Activated B cell treated with CpG ODN at 0.5 μM for 24 hours (primary cell): ENCODE measurements at regions of chr1 and their contacts with region 1.

Region 1: DNA sequence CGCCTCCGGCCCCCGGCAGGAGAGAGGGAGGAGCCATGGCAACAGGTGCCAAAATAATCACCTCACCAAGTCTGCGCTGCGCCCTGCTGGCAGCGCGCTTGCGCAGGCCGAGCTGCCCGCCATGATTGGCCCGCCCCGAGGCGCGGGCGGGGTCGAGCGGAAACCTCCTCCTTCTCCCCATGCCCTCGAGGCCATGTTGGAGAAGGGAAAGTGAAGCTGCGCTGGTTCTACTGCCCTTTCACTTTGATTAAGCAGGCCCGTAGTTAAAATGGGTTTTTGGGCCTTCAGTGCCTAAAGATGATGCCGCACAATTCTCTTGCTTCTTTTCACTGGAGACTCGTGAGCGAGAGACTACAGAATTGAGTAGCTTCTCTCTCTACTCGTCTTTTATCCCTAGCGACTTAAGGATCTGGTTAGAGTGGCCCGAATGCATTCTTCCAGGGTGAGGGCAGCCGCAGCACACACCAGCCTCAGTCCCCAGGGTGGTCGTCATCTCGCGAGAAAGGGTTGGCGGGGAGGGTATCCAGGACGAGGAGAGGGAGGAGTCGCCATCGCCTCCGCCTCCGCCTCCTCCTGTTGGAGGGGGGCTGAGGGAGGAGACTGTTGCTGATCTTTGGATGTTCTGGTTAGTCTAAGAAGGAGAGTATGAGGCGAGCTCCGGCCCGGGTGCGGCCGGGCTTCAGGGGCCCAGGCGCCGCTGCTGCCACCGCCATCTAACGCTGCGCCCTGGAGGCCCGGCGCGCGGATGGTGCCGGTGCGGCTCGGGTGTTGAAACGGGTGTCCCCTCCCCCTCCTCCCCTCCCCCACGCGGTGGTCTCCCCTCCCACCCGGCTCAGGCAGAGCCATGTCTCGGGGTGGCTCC is at the start of gene DCAF6:
- DNase-seq: peak; percentile 92
- ATAC-seq: peak; percentile 79
- H3K4me3 Mint-ChIP-seq: peak within 1 kb of the TSS; percentile 88
- H3K27ac Mint-ChIP-seq: peak within 1 kb of the TSS; percentile 100
- H3K4me1 Mint-ChIP-seq: peaks cover 35% of the 10 kb centered on the region
- H3K27me3 Mint-ChIP-seq: no peaks in the 10 kb centered on the region
- CTCF ChIP-seq: no peak
- total RNA-seq, gene DCAF6: 23.1 and 32.9 TPM in 2 replicates

Region 2: DNA sequence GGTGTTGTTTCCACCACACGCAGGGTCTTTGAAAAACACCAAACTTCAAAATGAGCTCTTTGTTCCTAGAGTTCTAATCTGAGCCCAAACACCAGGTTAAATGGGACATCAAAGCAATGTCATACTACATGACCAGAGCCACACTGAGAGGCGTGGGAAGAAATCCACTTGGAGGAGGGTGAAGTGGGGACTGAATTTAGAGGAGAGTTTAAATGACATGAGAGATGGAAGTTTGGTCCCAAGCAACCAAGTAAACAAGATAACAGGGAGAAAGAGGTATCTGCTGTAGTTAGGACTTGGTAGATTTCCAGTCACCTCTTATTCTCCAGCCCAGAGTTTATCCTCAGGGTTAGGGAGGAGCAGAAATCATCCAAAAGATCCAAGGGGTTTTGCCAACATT is 1478.6 kb before region 1 on chr1:
- CTCF ChIA-PET with region 1: no interaction called
- POLR2A ChIA-PET with region 1: no interaction called
- intact Hi-C with region 1: no loop called
- DNase-seq: no peak
- ATAC-seq: no peak
- H3K4me3 Mint-ChIP-seq: no peak overlapping the region
- H3K27ac Mint-ChIP-seq: no peak overlapping the region
- H3K4me1 Mint-ChIP-seq: no peaks in the 10 kb centered on the region
- H3K27me3 Mint-ChIP-seq: no peaks in the 10 kb centered on the region
- CTCF ChIP-seq: no peak

Region 3: GRCh38 chr1:166489670-166490436 is 1446.4 kb before region 1 on chr1:
- CTCF ChIA-PET with region 1: no interaction called
- POLR2A ChIA-PET with region 1: no interaction called
- intact Hi-C with region 1: loop called (anchors 5 kb)
- DNase-seq: peak; percentile 34
- ATAC-seq: peak; percentile 77
- H3K4me3 Mint-ChIP-seq: no peak overlapping the region
- H3K27ac Mint-ChIP-seq: no peak overlapping the region
- H3K4me1 Mint-ChIP-seq: peaks cover 6% of the 10 kb centered on the region
- H3K27me3 Mint-ChIP-seq: peaks cover 3% of the 10 kb centered on the region
- CTCF ChIP-seq: no peak

Region 4: DNA sequence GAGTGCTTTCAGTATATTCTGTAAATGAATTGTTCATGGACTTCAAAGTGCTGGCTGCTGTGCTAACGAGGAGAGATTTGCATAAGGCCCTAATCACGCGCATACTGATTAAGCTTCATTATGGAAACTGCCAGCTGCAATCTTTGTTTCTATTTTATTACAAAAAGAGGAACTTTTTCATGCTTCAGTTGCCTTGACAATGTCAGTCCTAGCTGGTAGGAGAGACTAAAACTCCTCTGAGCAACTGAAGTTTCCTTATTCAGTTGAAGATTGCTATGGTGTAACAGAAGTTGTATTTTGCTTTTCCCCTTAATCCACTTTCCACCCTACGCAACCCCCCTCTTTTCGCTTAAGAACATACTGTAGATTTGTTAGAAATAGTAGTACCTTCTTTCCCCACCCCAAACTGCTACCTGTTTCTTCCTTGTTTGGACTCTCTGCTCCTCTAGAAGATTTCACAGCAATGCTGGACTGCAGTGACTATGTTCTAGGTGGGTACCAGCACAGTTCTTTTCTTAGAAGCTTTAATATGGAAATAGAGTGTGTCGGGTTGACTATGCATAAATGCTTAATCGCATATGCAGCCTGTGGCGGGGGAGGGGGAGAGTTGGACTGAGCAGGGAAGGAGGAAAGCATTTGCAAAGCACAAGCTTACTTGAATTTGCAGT is 607.3 kb before region 1 on chr1:
- CTCF ChIA-PET with region 1: no interaction called
- POLR2A ChIA-PET with region 1: no interaction called
- intact Hi-C with region 1: loop called (anchors 5 kb)
- DNase-seq: peak; percentile 33
- ATAC-seq: peak; percentile 80
- H3K4me3 Mint-ChIP-seq: peak overlapping the region; percentile 84
- H3K27ac Mint-ChIP-seq: peak overlapping the region; percentile 97
- H3K4me1 Mint-ChIP-seq: peaks cover 65% of the 10 kb centered on the region
- H3K27me3 Mint-ChIP-seq: no peaks in the 10 kb centered on the region
- CTCF ChIP-seq: no peak

Region 5: DNA sequence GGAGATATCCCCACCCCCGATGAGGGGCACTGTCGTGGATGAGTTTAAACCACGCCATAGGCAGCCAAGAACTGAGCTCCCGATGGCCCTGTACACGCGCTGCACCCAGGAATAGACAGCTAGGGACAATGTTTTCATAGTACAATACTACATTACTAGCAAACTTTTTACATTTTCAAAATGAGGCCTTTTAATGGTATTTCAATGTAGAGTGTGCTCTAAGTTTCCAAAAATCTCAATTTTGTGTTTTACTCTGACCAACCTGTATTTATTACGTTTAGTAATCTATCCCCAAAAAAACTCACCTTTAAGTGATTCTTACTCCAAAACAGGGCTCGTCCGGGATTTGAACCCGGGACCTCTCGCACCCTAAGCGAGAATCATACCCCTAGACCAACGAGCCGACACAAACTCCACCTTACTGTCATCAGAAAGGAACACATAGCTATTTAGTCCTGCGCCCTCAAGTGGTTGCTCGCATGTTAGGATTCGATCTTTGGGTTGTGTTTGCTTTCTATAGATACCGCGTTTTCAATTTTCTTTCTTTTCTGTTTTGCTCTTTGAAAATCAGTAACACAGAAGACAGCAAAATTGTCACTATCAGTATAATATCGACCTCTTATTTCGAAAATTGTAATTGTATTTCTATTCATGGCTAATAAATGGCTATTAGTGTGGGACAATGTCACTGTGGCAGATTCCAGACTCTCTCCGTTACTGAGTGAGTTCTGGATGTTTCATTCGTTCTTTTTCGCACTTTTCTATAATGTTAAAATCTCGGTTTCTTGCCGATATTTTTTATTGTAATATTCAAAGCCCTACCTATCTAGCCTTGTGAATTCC is 220.9 kb before region 1 on chr1:
- CTCF ChIA-PET with region 1: no interaction called
- POLR2A ChIA-PET with region 1: interaction called, 21 read pairs
- intact Hi-C with region 1: loop called (anchors 1 kb)
- DNase-seq: peak; percentile 69
- ATAC-seq: peak; percentile 51
- H3K4me3 Mint-ChIP-seq: peak overlapping the region; percentile 85
- H3K27ac Mint-ChIP-seq: peak overlapping the region; percentile 98
- H3K4me1 Mint-ChIP-seq: peaks cover 68% of the 10 kb centered on the region
- H3K27me3 Mint-ChIP-seq: peaks cover 7% of the 10 kb centered on the region
- CTCF ChIP-seq: peak; percentile 68

Region 6: GRCh38 chr1:167973832-167974231 is 37.5 kb after region 1 on chr1:
- CTCF ChIA-PET with region 1: no interaction called
- POLR2A ChIA-PET with region 1: no interaction called
- intact Hi-C with region 1: no loop called
- DNase-seq: no peak
- ATAC-seq: no peak
- H3K4me3 Mint-ChIP-seq: no peak overlapping the region
- H3K27ac Mint-ChIP-seq: no peak overlapping the region
- H3K4me1 Mint-ChIP-seq: no peaks in the 10 kb centered on the region
- H3K27me3 Mint-ChIP-seq: no peaks in the 10 kb centered on the region
- CTCF ChIP-seq: no peak

Region 7: DNA sequence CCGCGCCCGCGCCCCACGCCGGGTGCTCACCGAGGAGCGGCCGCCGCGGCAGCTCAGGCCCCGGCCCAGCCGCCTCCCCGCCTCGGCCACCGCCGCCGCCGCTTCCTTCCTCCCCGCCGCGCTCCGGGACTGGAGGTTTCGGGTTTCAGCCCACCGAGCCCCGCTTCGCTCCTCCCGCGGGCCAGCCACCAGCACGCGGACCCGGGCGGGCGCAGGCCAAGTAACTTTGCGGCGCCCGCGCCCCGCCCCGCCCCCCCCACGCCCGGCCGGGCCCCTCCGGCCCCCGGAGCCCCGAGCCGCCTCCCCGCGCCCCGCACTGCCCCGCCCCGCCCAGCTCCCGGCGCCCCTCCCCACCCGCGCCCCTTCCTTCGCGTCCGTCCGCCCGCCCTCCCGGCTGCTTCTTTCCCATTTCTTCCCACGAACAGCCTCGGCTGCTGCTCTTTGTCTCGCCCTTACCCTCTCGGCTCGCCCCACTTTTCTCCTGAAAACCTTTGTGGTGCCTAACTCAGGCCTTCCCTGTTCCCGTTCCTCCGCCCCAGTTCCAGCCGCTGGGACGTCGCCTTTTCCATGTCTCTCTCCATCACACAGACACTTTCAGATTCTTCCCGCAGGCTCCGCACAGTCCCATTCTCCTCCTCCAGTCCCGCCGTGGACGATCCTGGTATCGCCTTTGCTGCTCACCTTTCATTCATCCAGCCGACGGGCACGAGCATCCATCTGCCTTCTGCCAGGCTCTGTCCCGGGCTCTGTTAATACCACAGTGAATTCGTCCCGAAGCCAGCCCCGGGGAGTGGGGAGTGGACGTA is 200.6 kb after region 1 on chr1 and contains the start of gene GPR161:
- CTCF ChIA-PET with region 1: no interaction called
- POLR2A ChIA-PET with region 1: no interaction called
- intact Hi-C with region 1: loop called (anchors 2 kb)
- DNase-seq: peak; percentile 37
- ATAC-seq: peak; percentile 57
- H3K4me3 Mint-ChIP-seq: peak within 1 kb of the TSS; percentile 88
- H3K27ac Mint-ChIP-seq: peak within 1 kb of the TSS; percentile 32
- H3K4me1 Mint-ChIP-seq: peaks cover 18% of the 10 kb centered on the region
- H3K27me3 Mint-ChIP-seq: peaks cover 33% of the 10 kb centered on the region
- CTCF ChIP-seq: no peak
- total RNA-seq, gene GPR161: 0.04 and 0.32 TPM in 2 replicates

Region 8: DNA sequence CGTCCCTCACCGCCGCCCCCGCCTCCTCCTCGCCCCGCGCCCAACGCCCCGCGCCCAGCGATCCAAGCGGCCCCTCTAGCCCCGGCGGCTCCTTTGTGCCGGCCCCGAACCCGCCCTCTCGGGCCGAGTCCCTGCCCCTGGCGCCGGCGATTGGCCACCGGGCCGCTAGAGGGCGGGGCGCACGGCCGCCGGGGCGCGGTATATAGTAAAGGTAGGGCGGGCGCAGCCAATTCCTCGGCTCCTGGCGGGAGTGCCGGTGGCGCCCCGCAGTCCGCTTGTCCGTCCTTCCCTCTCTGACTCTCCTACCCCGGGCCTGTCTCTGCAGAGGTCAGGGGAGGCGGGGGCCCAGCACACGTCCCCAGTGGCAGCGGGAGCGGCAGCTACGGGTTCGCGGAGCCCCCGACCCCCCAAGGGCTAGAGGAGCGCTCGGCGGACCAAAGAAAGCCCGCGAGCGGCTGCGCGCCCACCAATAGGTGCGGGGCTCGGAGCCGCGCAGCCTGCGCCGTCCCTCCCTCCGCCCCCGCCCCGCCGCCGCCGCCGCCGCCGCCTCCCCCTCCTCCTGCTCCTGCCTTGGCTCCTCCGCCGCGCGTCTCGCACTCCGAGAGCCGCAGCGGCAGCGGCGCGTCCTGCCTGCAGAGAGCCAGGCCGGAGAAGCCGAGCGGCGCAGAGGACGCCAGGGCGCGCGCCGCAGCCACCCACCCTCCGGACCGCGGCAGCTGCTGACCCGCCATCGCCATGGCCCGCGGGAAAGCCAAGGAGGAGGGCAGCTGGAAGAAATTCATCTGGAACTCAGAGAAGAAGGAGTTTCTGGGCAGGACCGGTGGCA is 1170.0 kb after region 1 on chr1 and contains the start of gene ATP1B1:
- CTCF ChIA-PET with region 1: no interaction called
- POLR2A ChIA-PET with region 1: no interaction called
- intact Hi-C with region 1: loop called (anchors 10 kb)
- DNase-seq: peak; percentile 77
- ATAC-seq: peak; percentile 95
- H3K4me3 Mint-ChIP-seq: peak within 1 kb of the TSS; percentile 89
- H3K27ac Mint-ChIP-seq: no peak within 1 kb of the TSS
- H3K4me1 Mint-ChIP-seq: peaks cover 18% of the 10 kb centered on the region
- H3K27me3 Mint-ChIP-seq: peaks cover 35% of the 10 kb centered on the region
- CTCF ChIP-seq: no peak
- total RNA-seq, gene ATP1B1: 1.6 and 1.8 TPM in 2 replicates

Region 9: GRCh38 chr1:169893494-169894362 is 1957.4 kb after region 1 on chr1 and contains the start of gene SCYL3:
- CTCF ChIA-PET with region 1: no interaction called
- POLR2A ChIA-PET with region 1: no interaction called
- intact Hi-C with region 1: loop called (anchors 2 kb)
- DNase-seq: peak; percentile 82
- ATAC-seq: peak; percentile 87
- H3K4me3 Mint-ChIP-seq: peak within 1 kb of the TSS; percentile 88
- H3K27ac Mint-ChIP-seq: peak within 1 kb of the TSS; percentile 100
- H3K4me1 Mint-ChIP-seq: peaks cover 40% of the 10 kb centered on the region
- H3K27me3 Mint-ChIP-seq: peaks cover 4% of the 10 kb centered on the region
- CTCF ChIP-seq: no peak
- total RNA-seq, gene SCYL3: 14.5 and 16.2 TPM in 2 replicates